Activated CD4-positive, alpha-beta T cell treated with anti-CD3 and anti-CD28 coated beads for 36 hours (primary cell): ENCODE measurements at regions of chrX and their contacts with region 1.

Region 1: GRCh38 chrX:70289793-70290776 is at the starts of genes KIF4A and PDZD11:
- DNase-seq: peak; percentile 89
- ATAC-seq: peak; percentile 100
- H3K4me3 Mint-ChIP-seq: peak within 1 kb of the TSS; percentile 88
- H3K27ac Mint-ChIP-seq: peak within 1 kb of the TSS; percentile 82
- H3K4me1 Mint-ChIP-seq: peaks cover 18% of the 10 kb centered on the region
- H3K27me3 Mint-ChIP-seq: no peaks in the 10 kb centered on the region
- total RNA-seq, gene KIF4A: 21.2 to 25.4 TPM
- total RNA-seq, gene PDZD11: 23.6 to 28.0 TPM

Region 2: GRCh38 chrX:70030301-70030767 is 259.8 kb before region 1 on chrX:
- CTCF ChIA-PET with region 1: no interaction called
- POLR2A ChIA-PET with region 1: no interaction called
- intact Hi-C with region 1: no loop called
- DNase-seq: peak; percentile 50
- ATAC-seq: peak; percentile 78
- H3K4me3 Mint-ChIP-seq: no peak overlapping the region
- H3K27ac Mint-ChIP-seq: no peak overlapping the region
- H3K4me1 Mint-ChIP-seq: peaks cover 8% of the 10 kb centered on the region
- H3K27me3 Mint-ChIP-seq: no peaks in the 10 kb centered on the region

Region 3: GRCh38 chrX:70208479-70208878 is 81.6 kb before region 1 on chrX:
- CTCF ChIA-PET with region 1: no interaction called
- POLR2A ChIA-PET with region 1: no interaction called
- intact Hi-C with region 1: no loop called
- DNase-seq: no peak
- ATAC-seq: no peak
- H3K4me3 Mint-ChIP-seq: no peak overlapping the region
- H3K27ac Mint-ChIP-seq: no peak overlapping the region
- H3K4me1 Mint-ChIP-seq: no peaks in the 10 kb centered on the region
- H3K27me3 Mint-ChIP-seq: no peaks in the 10 kb centered on the region

Region 4: DNA sequence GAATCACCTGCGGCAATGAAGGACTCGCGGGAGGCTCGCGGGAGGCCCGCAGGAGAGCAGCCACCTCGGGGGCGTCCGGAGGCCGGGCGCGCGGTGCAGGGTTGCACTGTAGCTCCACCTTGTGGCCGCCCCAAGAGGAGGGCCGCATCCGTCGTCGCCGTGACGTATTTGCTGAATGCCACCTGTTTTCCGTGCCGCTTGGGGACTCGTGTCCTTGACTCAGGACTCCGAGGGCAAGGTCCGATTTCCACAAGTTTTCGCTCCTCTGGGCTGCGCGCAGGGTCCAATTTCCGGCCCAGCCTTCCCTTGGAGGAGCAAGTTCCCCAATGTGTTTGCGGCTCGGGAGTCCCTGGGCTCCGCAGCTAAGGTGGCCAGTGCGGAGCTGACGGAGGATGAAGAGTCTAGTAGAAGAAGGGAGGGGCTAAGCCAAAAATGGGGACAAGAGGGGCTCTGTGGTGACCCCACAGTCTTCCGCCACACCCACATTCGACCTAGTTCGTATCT is 143.8 kb after region 1 on chrX:
- CTCF ChIA-PET with region 1: no interaction called
- POLR2A ChIA-PET with region 1: no interaction called
- intact Hi-C with region 1: loop called in 1 of 2 experiments (anchors 1 kb)
- DNase-seq: peak; percentile 86
- ATAC-seq: peak; percentile 80
- H3K4me3 Mint-ChIP-seq: peak overlapping the region; percentile 85
- H3K27ac Mint-ChIP-seq: peak overlapping the region; percentile 89
- H3K4me1 Mint-ChIP-seq: peaks cover 11% of the 10 kb centered on the region
- H3K27me3 Mint-ChIP-seq: peaks cover 14% of the 10 kb centered on the region